HCT116 (cell line): ENCODE measurements at regions of chr4 and their contacts with region 1.

Region 1: DNA sequence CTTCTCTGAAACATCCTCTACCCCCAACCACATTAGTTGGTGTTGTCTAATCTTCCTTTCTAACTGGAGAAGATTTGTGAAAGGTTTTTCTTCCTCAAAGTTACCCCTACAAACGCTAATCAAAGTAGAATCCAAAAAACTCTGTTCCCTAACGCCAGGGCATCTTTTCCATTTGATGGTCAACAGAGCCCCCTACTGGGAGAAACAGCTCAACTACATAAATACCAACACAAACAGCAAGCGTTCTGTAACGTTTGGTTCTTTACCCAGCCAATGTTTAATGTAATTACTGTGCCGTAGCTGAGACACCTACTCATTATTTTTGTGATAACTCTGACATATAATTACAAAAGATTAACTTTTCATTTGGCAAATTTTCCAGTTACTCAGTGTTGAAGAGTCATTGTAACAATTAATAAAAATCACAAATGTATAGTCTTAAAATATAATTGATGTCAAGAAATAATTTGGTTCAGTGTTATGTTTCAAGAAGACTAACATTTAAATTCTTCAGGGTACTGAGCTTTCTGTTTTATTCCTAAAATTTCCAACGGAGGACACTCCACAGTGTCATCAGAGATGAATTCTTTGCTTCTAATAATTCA is 94.9 kb upstream of the TBC1D9 start:
- DNase-seq: peak; percentile 65
- ATAC-seq: peak; percentile 91
- H3K4me3 ChIP-seq: no peak overlapping the region
- H3K27ac ChIP-seq: no peak overlapping the region
- H3K4me1 ChIP-seq: peaks cover 2 to 3% of the 10 kb centered on the region in 2 experiments; a peak in 3 of 4 replicates
- H3K27me3 ChIP-seq: no peaks in the 10 kb centered on the region
- CTCF ChIP-seq: peak; percentile 71 to 86 (median 82); a peak in 5 of 6 replicates
- POLR2A ChIP-seq: no peak
- RAD21 ChIP-seq: peak; percentile 96

Region 2: GRCh38 chr4:140012688-140013486 is 838.2 kb before region 1 on chr4:
- CTCF ChIA-PET with region 1: no interaction called
- POLR2A ChIA-PET with region 1: no interaction called
- RAD21 ChIA-PET with region 1: no interaction called
- intact Hi-C with region 1: loop called (anchors 2 kb)
- DNase-seq: peak; percentile 50
- ATAC-seq: peak; percentile 98
- H3K4me3 ChIP-seq: no peak overlapping the region
- H3K27ac ChIP-seq: no peak overlapping the region
- H3K4me1 ChIP-seq: peaks cover 3 to 7% of the 10 kb centered on the region in 2 experiments; a peak in 2 of 4 replicates
- H3K27me3 ChIP-seq: no peaks in the 10 kb centered on the region
- CTCF ChIP-seq: peak; percentile 69 to 87 (median 78)
- POLR2A ChIP-seq: no peak
- RAD21 ChIP-seq: peak; percentile 95

Region 3: GRCh38 chr4:140326395-140326993 is 524.6 kb before region 1 on chr4:
- CTCF ChIA-PET with region 1: interaction called, 31 read pairs
- POLR2A ChIA-PET with region 1: no interaction called
- RAD21 ChIA-PET with region 1: interaction called, 4 to 7 read pairs
- intact Hi-C with region 1: loop called (anchors 1 kb)
- DNase-seq: peak; percentile 33
- ATAC-seq: peak; percentile 93
- H3K4me3 ChIP-seq: no peak overlapping the region
- H3K27ac ChIP-seq: no peak overlapping the region
- H3K4me1 ChIP-seq: no peaks in the 10 kb centered on the region
- H3K27me3 ChIP-seq: no peaks in the 10 kb centered on the region
- CTCF ChIP-seq: peak; percentile 75 to 77 (median 76)
- POLR2A ChIP-seq: no peak
- RAD21 ChIP-seq: peak; percentile 85

Region 4: GRCh38 chr4:140523857-140524742 is 327.0 kb before region 1 on chr4 and contains the start of gene ELMOD2:
- CTCF ChIA-PET with region 1: no interaction called
- POLR2A ChIA-PET with region 1: no interaction called
- RAD21 ChIA-PET with region 1: no interaction called
- intact Hi-C with region 1: loop called (anchors 10 kb)
- DNase-seq: peak; percentile 92
- ATAC-seq: peak; percentile 99
- H3K4me3 ChIP-seq: peak within 1 kb of the TSS; percentile 85 to 92
- H3K27ac ChIP-seq: peak within 1 kb of the TSS; percentile 63
- H3K4me1 ChIP-seq: peaks cover 3 to 8% of the 10 kb centered on the region in 2 experiments; a peak in 2 of 4 replicates
- H3K27me3 ChIP-seq: no peaks in the 10 kb centered on the region
- CTCF ChIP-seq: peak; percentile 65 to 93 (median 91)
- POLR2A ChIP-seq: peak; percentile 74
- RAD21 ChIP-seq: peak; percentile 43; the same call in 1 of the 2 replicates
- total RNA-seq, gene ELMOD2: 26.6 TPM

Region 5: GRCh38 chr4:140609548-140610425 is 241.3 kb before region 1 on chr4:
- CTCF ChIA-PET with region 1: interaction called, 7 read pairs
- POLR2A ChIA-PET with region 1: no interaction called
- RAD21 ChIA-PET with region 1: no interaction called
- intact Hi-C with region 1: loop called (anchors 1 kb)
- DNase-seq: peak; percentile 41
- ATAC-seq: peak; percentile 98
- H3K4me3 ChIP-seq: no peak overlapping the region
- H3K27ac ChIP-seq: no peak overlapping the region
- H3K4me1 ChIP-seq: 0 out of 4 replicates have a peak, but pooled peaks cover 0 to 5% of the 10 kb centered on the region in 2 experiments
- H3K27me3 ChIP-seq: no peaks in the 10 kb centered on the region
- CTCF ChIP-seq: peak; percentile 41 to 77 (median 65); a peak in 5 of 6 replicates
- POLR2A ChIP-seq: no peak
- RAD21 ChIP-seq: peak; percentile 80

Region 6: GRCh38 chr4:140756319-140757231 is 94.6 kb before region 1 on chr4 and contains the start of gene TBC1D9:
- CTCF ChIA-PET with region 1: no interaction called
- POLR2A ChIA-PET with region 1: no interaction called
- RAD21 ChIA-PET with region 1: interaction called in 1 of 2 experiments, 3 read pairs
- intact Hi-C with region 1: loop called (anchors 5 kb)
- DNase-seq: peak; percentile 86
- ATAC-seq: peak; percentile 75
- H3K4me3 ChIP-seq: peak within 1 kb of the TSS; percentile 66 to 83
- H3K27ac ChIP-seq: peak within 1 kb of the TSS; percentile 82
- H3K4me1 ChIP-seq: peaks cover 6 to 22% of the 10 kb centered on the region in 2 experiments; a peak in 3 of 4 replicates
- H3K27me3 ChIP-seq: no peaks in the 10 kb centered on the region
- CTCF ChIP-seq: peak in 1 of 3 experiments; percentile 4; a peak in 1 of 6 replicates
- POLR2A ChIP-seq: peak; percentile 53
- RAD21 ChIP-seq: no peak
- total RNA-seq, gene TBC1D9: 9.5 TPM